Activated CD4-positive, alpha-beta T cell treated with anti-CD3 and anti-CD28 coated beads, Interleukin-2, amount 10 ng/mL, durations not matched to agents 7 days and 5 days (primary cell): ENCODE measurements at regions of chr14 and their contacts with region 1.

Region 1: DNA sequence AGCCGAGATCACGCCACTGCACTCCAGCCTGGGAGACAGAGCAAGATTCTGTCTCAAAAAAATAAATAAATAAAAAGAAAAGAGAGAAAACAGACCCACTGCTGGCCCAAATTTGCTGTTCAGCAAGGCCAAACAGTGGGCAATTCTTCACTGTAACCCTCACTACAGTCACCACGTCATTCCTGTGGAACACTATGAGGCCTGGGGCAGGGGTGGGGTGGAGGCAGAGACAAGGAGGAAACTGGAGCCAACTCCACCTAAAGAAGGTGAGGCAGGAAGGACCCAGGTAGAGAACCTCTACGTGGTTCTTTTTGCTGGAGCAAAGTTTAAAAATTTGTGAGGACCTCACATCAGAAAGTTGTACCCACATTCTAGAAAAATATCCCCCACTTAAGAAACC is 19.0 kb downstream of the GCH1 start:
- DNase-seq: no peak
- H3K4me3 Mint-ChIP-seq: no peak overlapping the region
- H3K27ac Mint-ChIP-seq: peak overlapping the region; percentile 72
- H3K4me1 Mint-ChIP-seq: peaks cover 56% of the 10 kb centered on the region
- H3K27me3 Mint-ChIP-seq: no peaks in the 10 kb centered on the region

Region 2: DNA sequence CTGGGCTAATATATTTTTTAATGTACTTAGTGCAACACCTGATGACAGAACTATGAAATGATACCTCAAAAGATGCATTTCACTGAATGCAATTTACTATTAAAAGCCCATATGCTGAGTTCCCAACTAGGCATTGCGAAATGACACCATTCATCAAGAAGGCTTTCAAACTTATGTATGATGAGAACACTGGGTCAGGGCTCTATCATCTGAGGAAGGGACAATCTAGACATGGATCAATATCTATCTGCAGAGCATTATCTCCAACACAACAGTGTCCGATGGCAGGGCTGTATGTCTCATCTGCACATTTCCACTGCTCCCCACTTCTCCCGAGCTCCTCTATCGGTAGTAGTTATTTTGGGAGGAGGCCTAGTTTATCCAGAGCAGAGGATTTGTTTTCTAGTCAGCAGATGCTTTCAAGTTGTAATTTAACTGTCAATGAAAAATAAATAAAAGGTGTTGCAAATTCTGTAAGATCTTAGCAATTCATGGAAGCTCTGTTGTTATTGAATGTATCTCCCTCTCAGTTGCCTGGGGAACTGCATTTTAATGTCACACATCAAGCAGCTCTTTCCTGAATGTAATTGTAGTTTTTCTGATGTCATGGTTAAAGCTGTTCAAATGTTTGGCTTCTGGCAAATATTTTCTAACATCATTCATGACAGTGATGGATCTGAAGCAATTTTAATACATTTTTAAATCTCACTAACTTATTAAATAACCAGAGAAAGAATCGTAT is 26.4 kb after region 1 on chr14:
- CTCF ChIA-PET with region 1: interaction called, 3 read pairs
- POLR2A ChIA-PET with region 1: interaction called, 16 read pairs
- DNase-seq: no peak
- H3K4me3 Mint-ChIP-seq: no peak overlapping the region
- H3K27ac Mint-ChIP-seq: no peak overlapping the region
- H3K4me1 Mint-ChIP-seq: peaks cover 33% of the 10 kb centered on the region
- H3K27me3 Mint-ChIP-seq: no peaks in the 10 kb centered on the region